Adrenal gland (tissue), 19 donors: ENCODE measurements at regions of chr9 and their contacts with region 1.

Region 1: GRCh38 chr9:127568971-127569885 is 42.8 kb upstream of the STXBP1 start:
- DNase-seq: peak; percentile 80 to 85 (median 84)
- H3K4me3 ChIP-seq: peak overlapping the region in 3 of 4 donors; percentile 18 to 65 (median 64)
- H3K27ac ChIP-seq: peak overlapping the region; percentile 65 to 98 (median 88)
- H3K4me1 ChIP-seq: peaks cover 31 to 60% of the 10 kb centered on the region in 2 donors
- H3K27me3 ChIP-seq: no peaks in the 10 kb centered on the region
- CTCF ChIP-seq: no peak
- POLR2A ChIP-seq: peak in 1 of 2 donors; percentile 65

Region 2: GRCh38 chr9:127380479-127380878 is 188.7 kb before region 1 on chr9:
- intact Hi-C with region 1: no loop called
- DNase-seq: peak in 1 of 7 donors; percentile 6
- H3K4me3 ChIP-seq: no peak overlapping the region
- H3K27ac ChIP-seq: no peak overlapping the region
- H3K4me1 ChIP-seq: no peaks in the 10 kb centered on the region
- H3K27me3 ChIP-seq: no peaks in the 10 kb centered on the region
- CTCF ChIP-seq: no peak
- POLR2A ChIP-seq: no peak

Region 3: DNA sequence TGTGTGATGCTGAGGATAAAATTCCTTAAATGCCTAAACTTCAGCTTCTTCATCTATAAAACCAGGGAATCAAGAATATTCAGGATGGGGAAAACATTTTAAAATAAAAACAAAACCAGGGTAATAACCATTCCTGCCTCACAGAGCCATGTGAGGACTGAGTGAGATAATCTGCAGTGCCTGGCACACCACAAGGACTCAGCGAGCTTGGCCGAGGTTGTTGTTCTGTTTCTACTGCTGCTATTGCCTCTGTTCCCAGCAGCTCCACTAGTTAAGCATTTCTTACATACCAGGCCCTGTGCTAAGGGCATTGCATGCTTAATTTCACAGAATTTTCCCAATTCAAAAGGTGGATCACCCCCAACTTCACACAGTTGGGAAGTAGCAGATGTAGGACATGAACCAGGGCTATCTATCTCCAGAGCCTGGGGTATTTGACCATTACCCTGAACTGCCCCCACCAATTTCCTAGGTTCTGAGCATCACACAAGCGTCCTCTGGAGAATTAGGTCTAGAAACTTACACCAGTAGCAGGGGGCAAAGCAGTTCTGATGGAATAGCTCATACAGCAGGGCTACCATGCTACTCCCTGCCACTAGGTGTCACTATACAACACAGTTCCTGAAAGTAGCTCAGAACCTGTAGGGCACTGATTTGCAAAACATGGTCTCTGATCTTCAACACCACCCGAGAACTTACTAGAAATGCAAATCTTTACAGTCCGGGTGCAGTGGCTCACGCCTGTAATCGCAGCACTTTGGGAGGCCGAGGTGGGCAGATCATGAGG is 43.6 kb before region 1 on chr9:
- intact Hi-C with region 1: loop called in 1 of 2 experiments (anchors 5 kb)
- DNase-seq: peak in 1 of 7 donors; percentile 46
- H3K4me3 ChIP-seq: no peak overlapping the region
- H3K27ac ChIP-seq: peak overlapping the region in 1 of 5 donors; percentile 77
- H3K4me1 ChIP-seq: peaks cover 36 to 46% of the 10 kb centered on the region in 2 donors
- H3K27me3 ChIP-seq: no peaks in the 10 kb centered on the region
- CTCF ChIP-seq: peak; percentile 24 to 60 (median 52)
- POLR2A ChIP-seq: no peak